IMR-90 (cell line): ENCODE measurements at regions of chr1 and their contacts with region 1.

Region 1: DNA sequence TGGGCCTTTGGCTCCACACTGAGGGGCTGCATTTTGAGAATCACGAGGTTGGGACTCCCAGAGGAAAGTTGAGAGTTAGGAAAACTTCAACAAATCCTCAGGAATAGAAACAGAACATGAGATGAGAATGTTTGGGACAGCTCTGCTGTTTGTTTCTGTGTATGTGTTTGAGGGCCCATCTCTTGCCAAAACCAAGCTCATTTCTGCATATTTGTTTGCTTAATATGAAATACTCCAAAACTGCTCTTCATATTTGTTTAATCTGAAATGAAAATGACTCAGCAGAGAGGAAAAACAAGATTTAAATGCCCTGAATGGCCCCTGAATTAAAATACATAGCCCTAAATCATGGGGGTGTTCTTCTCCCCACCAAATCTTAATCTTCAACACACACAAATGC is 78.1 kb downstream of the DDR2 start:
- DNase-seq: peak; percentile 59
- ATAC-seq: peak; percentile 64
- H3K4me3 ChIP-seq: no peak overlapping the region
- H3K27ac ChIP-seq: peak overlapping the region; percentile 100
- H3K4me1 ChIP-seq: peaks cover 28% of the 10 kb centered on the region
- H3K27me3 ChIP-seq: no peaks in the 10 kb centered on the region
- CTCF ChIP-seq: no peak
- POLR2A ChIP-seq: no peak
- RAD21 ChIP-seq: no peak

Region 2: DNA sequence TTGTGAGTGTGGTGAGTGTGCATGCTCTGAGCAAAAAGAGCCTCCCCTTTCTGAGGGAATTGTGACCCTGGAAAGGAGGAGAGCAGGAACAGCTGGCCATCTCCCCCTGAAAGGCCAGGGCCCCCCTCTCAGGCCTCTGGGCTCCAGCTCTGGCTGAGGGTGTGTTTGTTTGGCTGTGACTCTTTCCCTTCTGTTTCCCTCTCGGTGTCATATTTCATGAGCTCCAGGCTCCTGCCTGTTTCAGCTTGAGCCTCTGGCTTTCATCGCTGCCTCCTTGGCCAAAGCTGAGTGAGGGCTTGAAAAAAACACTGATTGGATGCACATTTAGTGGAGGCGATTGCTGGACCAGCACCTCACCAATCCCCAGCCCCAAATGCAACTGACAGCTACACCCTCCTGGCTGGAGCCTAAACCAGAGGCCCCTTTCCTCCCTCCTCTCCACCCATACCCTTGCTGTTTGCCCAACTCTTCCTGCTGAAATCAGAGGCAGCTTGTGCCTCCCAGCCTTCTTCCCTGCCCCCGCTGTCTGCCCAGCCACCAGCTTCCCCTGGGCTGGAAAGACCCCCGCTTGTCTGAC is 14.0 kb before region 1 on chr1:
- CTCF ChIA-PET with region 1: interaction called, 3 read pairs
- POLR2A ChIA-PET with region 1: no interaction called
- dilution Hi-C with region 1: no loop called
- in situ Hi-C with region 1: no loop called
- intact Hi-C with region 1: loop called (anchors 2 kb)
- DNase-seq: peak; percentile 93
- ATAC-seq: peak; percentile 93
- H3K4me3 ChIP-seq: no peak overlapping the region
- H3K27ac ChIP-seq: peak overlapping the region; percentile 80
- H3K4me1 ChIP-seq: peaks cover 27% of the 10 kb centered on the region
- H3K27me3 ChIP-seq: no peaks in the 10 kb centered on the region
- CTCF ChIP-seq: no peak
- POLR2A ChIP-seq: no peak
- RAD21 ChIP-seq: no peak

Region 3: DNA sequence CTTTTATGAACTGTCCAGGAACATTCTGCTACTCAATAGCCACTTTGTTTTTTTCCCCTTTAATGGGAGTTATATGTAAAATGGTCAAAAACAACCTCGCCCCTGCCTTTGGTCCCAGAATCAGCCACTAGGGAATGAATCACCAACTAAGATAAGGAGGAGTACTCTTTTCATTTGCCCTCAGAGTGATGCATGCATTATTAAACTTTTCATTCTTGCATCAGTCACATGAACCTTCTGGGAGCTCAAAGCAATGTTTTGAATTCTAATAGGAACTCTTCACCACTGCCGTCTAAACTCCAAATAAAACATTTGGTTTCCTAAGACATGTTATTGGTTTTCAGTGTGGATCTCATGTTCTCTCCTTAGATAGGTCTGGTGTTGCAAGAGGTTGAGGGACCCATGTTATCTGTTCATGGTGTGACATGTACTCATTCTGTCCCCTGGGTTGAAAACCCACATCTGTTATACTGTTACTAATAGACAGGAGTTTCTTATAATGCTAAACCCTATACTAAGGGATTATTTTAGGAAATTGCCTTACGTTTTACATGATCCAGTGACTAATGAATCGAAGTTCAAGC is 62.3 kb after region 1 on chr1:
- CTCF ChIA-PET with region 1: no interaction called
- POLR2A ChIA-PET with region 1: no interaction called
- dilution Hi-C with region 1: no loop called
- in situ Hi-C with region 1: no loop called
- intact Hi-C with region 1: loop called (anchors 5 kb)
- DNase-seq: peak; percentile 66
- ATAC-seq: peak; percentile 80
- H3K4me3 ChIP-seq: no peak overlapping the region
- H3K27ac ChIP-seq: no peak overlapping the region
- H3K4me1 ChIP-seq: no peaks in the 10 kb centered on the region
- H3K27me3 ChIP-seq: no peaks in the 10 kb centered on the region
- CTCF ChIP-seq: no peak
- POLR2A ChIP-seq: no peak
- RAD21 ChIP-seq: peak; percentile 8; the same call in 1 of the 2 replicates